K562 (cell line): ENCODE measurements at regions of chr6 and their contacts with region 1.

Region 1: GRCh38 chr6:108294727-108295625 is at the start of gene AFG1L:
- DNase-seq: peak; percentile 92 to 94 (median 92)
- ATAC-seq: peak; percentile 95
- H3K4me3 ChIP-seq: peak within 1 kb of the TSS; percentile 55
- H3K27ac ChIP-seq: peak within 1 kb of the TSS; percentile 90
- H3K4me1 ChIP-seq: peaks cover 3 to 14% of the 10 kb centered on the region in 2 experiments; a peak in 3 of 5 replicates
- H3K27me3 ChIP-seq: no peaks in the 10 kb centered on the region
- CTCF ChIP-seq: 0 out of 6 replicates have a peak, but pooled peaks of 1 of the 3 experiments have one; percentile 1
- EP300 ChIP-seq: peak; percentile 22; the same call in 1 of the 2 replicates
- POLR2A ChIP-seq: peak; percentile 88
- RAD21 ChIP-seq: no peak
- polyA plus RNA-seq, gene AFG1L: 2.6 to 3.8 TPM

Region 2: DNA sequence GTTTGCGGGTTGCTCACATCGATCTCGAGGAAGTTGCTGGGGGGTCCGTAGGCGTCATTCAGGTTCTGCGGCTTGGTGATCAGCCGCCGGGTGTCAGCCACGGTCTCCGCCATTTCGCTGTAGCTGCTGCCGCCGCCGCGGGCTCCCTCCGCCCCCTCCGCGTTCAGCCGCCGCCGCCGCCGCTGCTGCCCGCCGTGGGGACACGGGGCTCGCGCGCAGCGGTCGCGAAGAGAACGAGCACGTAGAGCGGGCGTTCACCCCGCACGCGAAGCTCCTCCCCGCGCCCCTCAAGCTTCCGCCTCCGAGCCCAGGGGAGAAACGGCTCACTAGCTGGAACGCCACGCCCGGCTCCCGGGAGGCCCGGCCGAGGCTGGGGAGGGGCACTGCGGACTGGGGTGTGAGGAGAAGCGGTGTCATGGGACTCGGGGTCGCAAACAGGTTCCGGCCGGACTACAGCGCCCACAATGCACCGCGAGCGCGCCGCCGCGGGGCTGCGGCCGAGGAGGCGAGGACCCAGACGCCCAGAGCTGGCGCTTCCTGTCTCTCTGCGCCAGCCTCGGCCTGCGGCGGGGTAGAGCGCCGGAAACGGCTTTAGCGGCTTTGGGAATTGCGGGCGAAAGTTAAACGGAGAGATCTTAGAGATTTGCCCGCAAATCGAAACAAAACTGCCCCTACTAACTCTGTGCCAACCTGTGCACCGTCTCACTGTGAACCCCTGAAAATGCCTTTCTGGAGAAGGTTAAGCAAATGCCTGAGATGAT is 34.0 kb before region 1 on chr6 and contains the start of gene SNX3:
- CTCF ChIA-PET with region 1: no interaction called
- POLR2A ChIA-PET with region 1: interaction called, 5 read pairs
- in situ Hi-C with region 1: no loop called
- intact Hi-C with region 1: loop called (anchors 2 kb)
- DNase-seq: peak; percentile 93 to 97 (median 95)
- ATAC-seq: peak; percentile 95
- H3K4me3 ChIP-seq: peak within 1 kb of the TSS; percentile 100
- H3K27ac ChIP-seq: peak within 1 kb of the TSS; percentile 86
- H3K4me1 ChIP-seq: peaks cover 10 to 17% of the 10 kb centered on the region in 2 experiments
- H3K27me3 ChIP-seq: no peaks in the 10 kb centered on the region
- CTCF ChIP-seq: peak; percentile 8 to 39 (median 17); a peak in 2 of 6 replicates
- EP300 ChIP-seq: no peak
- POLR2A ChIP-seq: peak; percentile 92
- RAD21 ChIP-seq: no peak
- polyA plus RNA-seq, gene SNX3: 48.9 to 68.3 TPM

Region 3: DNA sequence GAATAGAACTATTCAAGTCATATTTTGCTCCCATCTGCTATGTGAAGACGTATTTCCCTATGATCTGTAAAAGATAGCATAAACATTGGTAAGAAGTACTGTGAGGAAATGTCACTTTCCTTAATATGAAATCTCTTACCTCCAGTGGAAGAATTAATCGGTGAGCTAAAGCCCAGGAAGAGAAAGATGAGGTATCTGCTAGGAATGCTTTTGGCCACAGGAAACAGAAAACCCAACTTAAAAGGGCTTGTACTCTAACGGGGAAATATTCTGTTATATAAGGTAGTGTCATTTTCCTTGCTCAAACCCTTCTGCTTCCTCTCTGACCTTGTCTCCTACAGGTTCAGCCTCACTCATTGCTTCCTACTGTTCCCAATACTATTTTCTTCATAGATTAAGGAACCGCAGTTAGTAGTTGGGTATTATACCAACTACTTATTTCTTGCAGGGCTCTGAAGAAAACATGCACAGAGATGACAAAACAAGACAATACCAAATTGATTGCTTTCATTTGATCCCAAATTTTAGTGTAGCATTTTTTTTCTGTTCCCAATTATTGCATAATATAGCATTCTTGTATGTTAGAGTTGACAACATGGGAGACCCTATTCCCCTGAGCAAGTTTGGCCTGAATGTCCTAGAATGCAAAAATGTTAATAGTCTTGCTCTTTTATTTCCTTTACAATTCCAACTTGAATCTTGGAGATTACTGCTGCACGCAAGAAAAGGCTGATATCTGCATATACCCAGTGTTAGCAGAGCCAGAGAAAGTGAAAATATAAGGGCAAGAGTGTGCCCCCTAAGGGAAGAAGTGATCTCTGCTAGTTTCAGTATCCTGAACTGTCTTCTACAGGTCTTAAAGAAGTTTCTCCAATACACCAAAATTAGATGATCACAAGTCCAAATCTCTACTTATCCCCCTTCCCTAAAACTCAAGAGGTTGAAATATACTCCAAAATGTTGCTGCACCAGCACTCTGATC is 65.2 kb after region 1 on chr6:
- CTCF ChIA-PET with region 1: no interaction called
- POLR2A ChIA-PET with region 1: interaction called, 3 read pairs
- in situ Hi-C with region 1: no loop called
- intact Hi-C with region 1: loop called (anchors 1 kb)
- DNase-seq: peak in 2 of 4 experiments; percentile 19 to 36
- ATAC-seq: peak; percentile 76
- H3K4me3 ChIP-seq: no peak overlapping the region
- H3K27ac ChIP-seq: peak overlapping the region; percentile 91
- H3K4me1 ChIP-seq: peaks cover 10 to 30% of the 10 kb centered on the region in 2 experiments
- H3K27me3 ChIP-seq: no peaks in the 10 kb centered on the region
- CTCF ChIP-seq: peak; percentile 33 to 49 (median 44); a peak in 4 of 6 replicates
- EP300 ChIP-seq: no peak
- POLR2A ChIP-seq: no peak
- RAD21 ChIP-seq: peak; percentile 34 to 55